ENCODE measurements at regions of chr12 and their contacts with region 1.

Region 1: DNA sequence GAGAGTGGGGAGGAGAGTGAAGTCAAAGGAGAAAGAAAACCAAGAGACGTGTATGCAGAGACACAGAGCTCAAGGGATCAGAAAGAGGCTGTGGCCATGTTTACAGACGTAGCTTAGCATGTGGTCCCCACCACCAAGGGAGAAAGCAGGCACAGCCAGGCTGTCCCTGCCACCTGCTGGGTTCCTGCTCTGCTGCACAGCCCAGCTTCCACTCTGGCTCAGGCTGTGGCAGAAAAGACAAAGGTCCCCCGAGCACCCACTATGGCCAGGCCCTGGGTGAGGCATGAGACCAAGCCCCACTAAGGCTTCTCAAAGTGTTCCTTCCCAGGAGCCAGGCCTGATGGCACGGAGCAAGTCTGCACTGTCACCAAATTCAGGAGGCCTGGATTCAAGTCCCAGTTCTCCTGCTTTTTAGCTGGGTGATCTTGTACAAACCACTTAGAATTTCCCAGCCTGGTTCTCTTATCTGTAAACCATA is 25.9 kb upstream of the COL2A1 start:
- DNase-seq: no peak
- ATAC-seq: no peak
- H3K4me3 Mint-ChIP-seq: no peak overlapping the region
- H3K27ac Mint-ChIP-seq: no peak overlapping the region
- H3K4me1 Mint-ChIP-seq: peaks cover 6% of the 10 kb centered on the region
- H3K27me3 Mint-ChIP-seq: peaks cover 100% of the 10 kb centered on the region
- CTCF ChIP-seq: no peak

Region 2: GRCh38 chr12:48001505-48002413 is 28.5 kb before region 1 on chr12:
- CTCF ChIA-PET with region 1: interaction called, 10 read pairs
- POLR2A ChIA-PET with region 1: no interaction called
- DNase-seq: peak; percentile 78
- ATAC-seq: peak; percentile 57
- H3K4me3 Mint-ChIP-seq: peak overlapping the region; percentile 81
- H3K27ac Mint-ChIP-seq: 0 out of 2 replicates have a peak overlapping the region, but pooled peaks have one; percentile 49
- H3K4me1 Mint-ChIP-seq: peaks cover 67% of the 10 kb centered on the region
- H3K27me3 Mint-ChIP-seq: peaks cover 100% of the 10 kb centered on the region
- CTCF ChIP-seq: no peak

Measured in WTC11 (cell line).